ENCODE measurements at regions of chr14 and their contacts with region 1.

Region 1: GRCh38 chr14:100285021-100285912 is 21.0 kb downstream of the SLC25A29 start:
- DNase-seq: peak; percentile 32
- ATAC-seq: peak; percentile 90
- H3K4me3 ChIP-seq: peak overlapping the region; percentile 65
- H3K27ac ChIP-seq: peak overlapping the region; percentile 71
- H3K4me1 ChIP-seq: peaks cover 4% of the 10 kb centered on the region
- H3K27me3 ChIP-seq: no peaks in the 10 kb centered on the region
- CTCF ChIP-seq: peak; percentile 71
- POLR2A ChIP-seq: no peak
- RAD21 ChIP-seq: peak; percentile 34

Region 2: GRCh38 chr14:100332797-100333196 is 47.5 kb after region 1 on chr14:
- CTCF ChIA-PET with region 1: no interaction called
- POLR2A ChIA-PET with region 1: no interaction called
- dilution Hi-C with region 1: no loop called
- in situ Hi-C with region 1: no loop called
- intact Hi-C with region 1: no loop called
- DNase-seq: no peak
- ATAC-seq: no peak
- H3K4me3 ChIP-seq: no peak overlapping the region
- H3K27ac ChIP-seq: no peak overlapping the region
- H3K4me1 ChIP-seq: no peaks in the 10 kb centered on the region
- H3K27me3 ChIP-seq: no peaks in the 10 kb centered on the region
- CTCF ChIP-seq: no peak
- POLR2A ChIP-seq: no peak
- RAD21 ChIP-seq: no peak

Region 3: GRCh38 chr14:100375963-100376735 is 90.9 kb after region 1 on chr14:
- CTCF ChIA-PET with region 1: interaction called, 3 read pairs
- POLR2A ChIA-PET with region 1: no interaction called
- dilution Hi-C with region 1: no loop called
- in situ Hi-C with region 1: no loop called
- intact Hi-C with region 1: loop called (anchors 5 kb)
- DNase-seq: peak; percentile 95
- ATAC-seq: peak; percentile 81
- H3K4me3 ChIP-seq: peak within 1 kb of the TSS; percentile 77
- H3K27ac ChIP-seq: peak within 1 kb of the TSS; percentile 96
- H3K4me1 ChIP-seq: peaks cover 11% of the 10 kb centered on the region
- H3K27me3 ChIP-seq: no peaks in the 10 kb centered on the region
- CTCF ChIP-seq: no peak
- POLR2A ChIP-seq: peak; percentile 96
- RAD21 ChIP-seq: no peak

Measured in IMR-90 (cell line).